A673 (cell line): ENCODE measurements at regions of chr10 and their contacts with region 1.

Region 1: GRCh38 chr10:52644373-52645186 is 128.0 kb downstream of the MBL2 start:
- DNase-seq: peak; percentile 76
- H3K4me3 ChIP-seq: no peak overlapping the region
- H3K27ac ChIP-seq: no peak overlapping the region
- H3K4me1 ChIP-seq: no peaks in the 10 kb centered on the region
- H3K27me3 ChIP-seq: no peaks in the 10 kb centered on the region
- CTCF ChIP-seq: peak; percentile 72

Region 2: GRCh38 chr10:52729271-52730104 is 84.9 kb after region 1 on chr10:
- CTCF ChIA-PET with region 1: no interaction called
- POLR2A ChIA-PET with region 1: no interaction called
- intact Hi-C with region 1: loop called (anchors 1 kb)
- DNase-seq: peak; percentile 54
- H3K4me3 ChIP-seq: peak overlapping the region; percentile 22
- H3K27ac ChIP-seq: no peak overlapping the region
- H3K4me1 ChIP-seq: no peaks in the 10 kb centered on the region
- H3K27me3 ChIP-seq: no peaks in the 10 kb centered on the region
- CTCF ChIP-seq: peak; percentile 68

Region 3: GRCh38 chr10:52779541-52780390 is 135.2 kb after region 1 on chr10:
- CTCF ChIA-PET with region 1: interaction called, 3 read pairs
- POLR2A ChIA-PET with region 1: no interaction called
- intact Hi-C with region 1: loop called (anchors 1 kb)
- DNase-seq: peak; percentile 70
- H3K4me3 ChIP-seq: no peak overlapping the region
- H3K27ac ChIP-seq: no peak overlapping the region
- H3K4me1 ChIP-seq: no peaks in the 10 kb centered on the region
- H3K27me3 ChIP-seq: no peaks in the 10 kb centered on the region
- CTCF ChIP-seq: peak; percentile 86

Region 4: DNA sequence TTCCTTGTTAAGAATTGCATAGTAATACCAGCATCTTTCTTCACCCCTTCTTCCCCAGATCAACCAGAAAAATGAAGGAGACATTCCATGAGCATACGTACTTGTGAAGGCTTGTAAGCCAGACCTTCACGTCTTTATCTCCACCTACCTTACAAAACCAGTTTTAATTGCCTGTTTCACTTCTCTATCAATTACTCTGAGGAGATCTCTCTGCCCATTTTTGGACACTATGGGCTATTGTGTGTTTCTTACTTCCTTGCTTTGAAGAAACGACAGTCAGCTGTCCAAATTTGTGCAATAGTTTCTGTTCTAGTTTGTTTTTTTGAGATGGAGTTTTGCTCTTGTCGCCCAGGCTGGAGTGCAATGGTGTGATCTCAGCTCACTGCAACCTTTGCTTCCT is 477.7 kb after region 1 on chr10:
- CTCF ChIA-PET with region 1: no interaction called
- POLR2A ChIA-PET with region 1: no interaction called
- intact Hi-C with region 1: no loop called
- DNase-seq: no peak
- H3K4me3 ChIP-seq: no peak overlapping the region
- H3K27ac ChIP-seq: no peak overlapping the region
- H3K4me1 ChIP-seq: no peaks in the 10 kb centered on the region
- H3K27me3 ChIP-seq: no peaks in the 10 kb centered on the region
- CTCF ChIP-seq: no peak